Activated CD8-positive, alpha-beta T cell treated with anti-CD3 and anti-CD28 coated beads for 36 hours (primary cell): ENCODE measurements at regions of chr4 and their contacts with region 1.

Region 1: GRCh38 chr4:87235020-87235671 is 14.7 kb upstream of the KLHL8 start:
- DNase-seq: no peak
- ATAC-seq: no peak
- H3K4me3 Mint-ChIP-seq: peak overlapping the region; percentile 72
- H3K27ac Mint-ChIP-seq: no peak overlapping the region
- H3K4me1 Mint-ChIP-seq: no peaks in the 10 kb centered on the region
- H3K27me3 Mint-ChIP-seq: peaks cover 3% of the 10 kb centered on the region
- CTCF ChIP-seq: no peak

Region 2: GRCh38 chr4:87220094-87220822 is 14.9 kb before region 1 on chr4 and contains the start of gene KLHL8:
- CTCF ChIA-PET with region 1: interaction called, 10 read pairs
- POLR2A ChIA-PET with region 1: no interaction called
- intact Hi-C with region 1: no loop called
- DNase-seq: peak; percentile 87
- ATAC-seq: peak; percentile 93
- H3K4me3 Mint-ChIP-seq: peak within 1 kb of the TSS; percentile 91
- H3K27ac Mint-ChIP-seq: peak within 1 kb of the TSS; percentile 92
- H3K4me1 Mint-ChIP-seq: peaks cover 17% of the 10 kb centered on the region
- H3K27me3 Mint-ChIP-seq: no peaks in the 10 kb centered on the region
- CTCF ChIP-seq: no peak
- total RNA-seq, gene KLHL8: 12.0 to 12.5 TPM